BJ (cell line): ENCODE measurements at regions of chr13 and their contacts with region 1.

Region 1: GRCh38 chr13:102800145-102801041 is 1.5 kb downstream of the BIVM start:
- DNase-seq: no peak
- H3K4me3 ChIP-seq: peak overlapping the region; percentile 96
- H3K27me3 ChIP-seq: no peaks in the 10 kb centered on the region
- CTCF ChIP-seq: peak; percentile 81

Region 2: GRCh38 chr13:102788683-102789082 is 11.7 kb before region 1 on chr13:
- CTCF ChIA-PET with region 1: interaction called, 10 read pairs
- POLR2A ChIA-PET with region 1: no interaction called
- DNase-seq: no peak
- H3K4me3 ChIP-seq: no peak overlapping the region
- H3K27me3 ChIP-seq: no peaks in the 10 kb centered on the region
- CTCF ChIP-seq: no peak

Region 3: GRCh38 chr13:102812611-102813287 is 12.4 kb after region 1 on chr13:
- CTCF ChIA-PET with region 1: interaction called, 11 read pairs
- POLR2A ChIA-PET with region 1: no interaction called
- DNase-seq: no peak
- H3K4me3 ChIP-seq: no peak overlapping the region
- H3K27me3 ChIP-seq: no peaks in the 10 kb centered on the region
- CTCF ChIP-seq: no peak

Region 4: DNA sequence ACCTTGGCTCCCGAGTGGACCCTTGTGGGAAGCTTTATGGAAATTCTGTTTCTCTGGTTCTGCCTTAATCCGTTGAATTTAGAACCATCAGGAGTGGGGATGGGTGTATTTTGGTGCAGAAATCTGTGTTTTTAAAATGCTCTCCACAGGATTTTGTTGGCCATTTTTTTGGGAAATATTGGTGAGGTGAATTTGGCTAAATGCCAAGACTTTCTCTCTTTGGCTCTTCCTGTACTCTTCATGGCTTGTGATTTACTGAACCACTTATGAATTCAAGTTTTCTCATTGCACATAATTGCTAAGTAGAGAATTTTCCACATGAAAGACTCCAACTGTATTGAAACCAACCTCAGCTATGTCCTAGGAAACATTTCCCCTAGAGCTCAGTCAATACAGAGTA is 105.5 kb after region 1 on chr13:
- CTCF ChIA-PET with region 1: no interaction called
- POLR2A ChIA-PET with region 1: interaction called, 11 read pairs
- DNase-seq: no peak
- H3K4me3 ChIP-seq: no peak overlapping the region
- H3K27me3 ChIP-seq: no peaks in the 10 kb centered on the region
- CTCF ChIP-seq: no peak

Region 5: DNA sequence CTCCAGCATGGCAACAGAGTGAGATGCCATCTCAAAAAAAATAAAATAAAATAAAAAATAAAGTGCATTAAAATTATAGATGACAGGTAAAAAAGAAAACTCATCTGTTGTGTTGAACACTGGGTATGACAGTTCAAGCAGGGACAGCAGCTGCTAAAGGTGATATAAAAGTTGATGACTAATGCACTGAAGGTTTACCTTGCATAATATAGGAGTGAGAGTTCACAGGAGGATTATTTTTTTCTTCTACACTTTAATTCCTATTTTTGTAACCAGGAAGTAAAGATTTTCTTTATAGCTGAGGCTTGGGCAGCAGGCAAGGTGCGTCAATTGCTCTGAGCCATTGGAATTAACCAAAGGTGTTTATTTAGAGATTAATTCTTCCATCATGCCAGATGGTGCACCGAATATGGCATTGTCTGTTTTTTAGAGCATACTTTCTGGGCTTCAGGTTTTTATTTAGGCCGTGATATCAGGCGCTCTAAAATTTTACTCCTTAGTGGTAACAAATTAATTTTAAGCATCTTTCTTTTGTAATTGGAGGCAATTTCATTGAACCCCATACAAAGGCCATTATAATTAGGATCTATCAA is 602.9 kb after region 1 on chr13:
- CTCF ChIA-PET with region 1: no interaction called
- POLR2A ChIA-PET with region 1: no interaction called
- DNase-seq: no peak
- H3K4me3 ChIP-seq: no peak overlapping the region
- H3K27me3 ChIP-seq: no peaks in the 10 kb centered on the region
- CTCF ChIP-seq: no peak